WTC11 (cell line): ENCODE measurements at regions of chr19 and their contacts with region 1.

Region 1: DNA sequence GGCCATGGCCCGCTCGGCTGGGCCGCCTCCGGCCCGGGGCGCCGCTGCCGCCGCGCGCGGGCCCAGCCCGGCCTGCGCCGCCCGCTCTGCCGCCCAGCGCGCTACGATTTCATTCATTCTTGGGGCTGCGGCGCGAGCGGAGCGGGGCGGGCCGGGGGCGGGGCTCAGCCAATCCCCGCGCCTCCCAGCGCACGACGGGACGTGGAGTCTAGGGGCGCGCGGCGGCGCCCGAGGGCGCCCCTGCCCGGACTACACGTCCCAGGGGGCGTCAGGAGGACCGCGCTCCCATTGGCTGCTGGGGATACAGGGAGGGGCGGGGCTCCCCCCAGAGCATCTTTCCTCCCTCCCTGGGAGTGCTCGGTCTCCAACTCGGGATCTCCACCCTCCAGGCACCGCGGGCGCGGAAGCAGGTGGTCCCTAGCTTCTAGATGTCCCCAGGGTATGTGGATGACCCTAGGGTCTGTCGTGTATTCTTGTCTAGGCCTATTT is 5.6 kb upstream of the DPF1 start:
- DNase-seq: peak; percentile 79
- ATAC-seq: peak; percentile 35
- H3K4me3 Mint-ChIP-seq: peak overlapping the region; percentile 58
- H3K27ac Mint-ChIP-seq: no peak overlapping the region
- H3K4me1 Mint-ChIP-seq: peaks cover 20% of the 10 kb centered on the region
- H3K27me3 Mint-ChIP-seq: peaks cover 40% of the 10 kb centered on the region
- CTCF ChIP-seq: no peak

Region 2: DNA sequence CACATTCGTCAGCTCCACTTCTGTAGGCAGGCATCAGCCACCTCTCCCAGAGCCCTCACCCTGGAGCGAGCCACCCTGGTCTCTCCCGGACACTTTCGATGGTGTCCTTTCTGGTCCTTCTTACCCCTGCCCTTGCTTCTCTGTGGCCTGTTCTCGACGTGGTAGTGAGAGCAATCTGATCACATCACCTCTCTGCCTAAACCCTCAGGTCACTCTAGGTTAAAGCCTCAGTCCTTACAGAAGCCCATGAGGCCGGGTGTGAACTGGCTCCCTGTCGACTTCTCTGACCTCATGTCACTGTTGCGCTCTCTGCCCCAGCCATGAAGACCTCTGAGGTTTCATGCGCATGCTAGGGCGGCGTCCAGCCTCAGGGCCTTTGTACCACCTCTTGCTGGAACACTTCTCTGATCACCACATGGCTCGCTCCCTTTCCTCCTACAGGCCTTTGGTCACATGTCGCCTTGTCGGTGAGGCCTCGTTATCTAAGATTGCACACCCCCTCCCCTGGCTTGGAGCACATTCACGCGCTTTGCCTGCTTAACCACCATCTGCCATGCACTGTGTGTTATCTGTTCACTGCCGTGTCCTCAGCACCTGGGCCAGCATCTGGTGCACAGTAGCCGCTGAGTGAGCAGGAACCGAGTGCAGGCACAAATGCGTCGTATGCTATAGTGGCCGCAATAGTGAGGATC is 107.1 kb before region 1 on chr19:
- CTCF ChIA-PET with region 1: no interaction called
- POLR2A ChIA-PET with region 1: no interaction called
- DNase-seq: no peak
- ATAC-seq: no peak
- H3K4me3 Mint-ChIP-seq: no peak overlapping the region
- H3K27ac Mint-ChIP-seq: no peak overlapping the region
- H3K4me1 Mint-ChIP-seq: no peaks in the 10 kb centered on the region
- H3K27me3 Mint-ChIP-seq: no peaks in the 10 kb centered on the region
- CTCF ChIP-seq: no peak

Region 3: GRCh38 chr19:38245826-38246498 is 16.3 kb after region 1 on chr19:
- CTCF ChIA-PET with region 1: interaction called, 45 read pairs
- POLR2A ChIA-PET with region 1: interaction called, 3 read pairs
- DNase-seq: no peak
- ATAC-seq: no peak
- H3K4me3 Mint-ChIP-seq: no peak overlapping the region
- H3K27ac Mint-ChIP-seq: 0 out of 2 replicates have a peak overlapping the region, but pooled peaks have one; percentile 3
- H3K4me1 Mint-ChIP-seq: peaks cover 17% of the 10 kb centered on the region
- H3K27me3 Mint-ChIP-seq: peaks cover 2% of the 10 kb centered on the region; the same call in 1 of the 2 replicates
- CTCF ChIP-seq: no peak

Region 4: DNA sequence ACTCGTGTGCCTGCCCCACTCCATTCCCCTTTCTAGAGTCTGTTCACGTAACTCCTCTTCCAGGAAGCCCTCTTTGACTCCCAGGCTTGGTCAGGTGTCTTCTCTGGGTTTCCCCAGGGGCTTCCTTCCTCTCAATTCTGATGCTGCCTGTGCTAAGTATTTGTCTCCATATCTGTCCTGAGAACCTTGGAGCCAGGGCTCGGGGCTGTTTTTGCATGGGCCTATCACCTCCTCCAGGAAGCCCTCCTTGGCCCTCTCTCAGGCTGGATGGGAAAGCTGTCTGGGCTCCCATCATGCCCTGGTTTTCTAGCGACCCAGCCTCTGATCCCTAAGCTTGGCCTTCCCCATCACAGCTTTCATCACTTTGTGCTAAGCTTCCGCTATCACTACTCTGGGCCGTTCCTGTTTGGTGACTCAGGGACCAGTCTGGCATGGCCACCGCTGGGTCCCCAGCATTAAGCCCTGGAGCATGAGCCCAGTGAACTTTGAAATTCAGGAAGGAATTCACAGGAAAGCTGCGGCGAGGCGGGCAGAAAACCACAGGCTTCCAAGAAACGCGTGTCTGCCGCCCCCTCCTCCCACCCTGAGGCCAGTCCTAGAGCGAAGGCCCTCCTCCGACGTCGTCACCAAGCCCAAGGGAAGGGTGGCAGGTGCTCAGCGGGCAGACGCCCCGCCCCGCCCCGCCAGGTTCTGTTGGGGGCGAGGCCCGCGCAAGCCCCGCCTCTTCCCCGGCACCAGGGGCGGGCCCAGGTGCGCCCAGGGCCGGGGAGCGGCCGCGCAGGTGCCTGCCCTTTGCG is 34.3 kb after region 1 on chr19:
- CTCF ChIA-PET with region 1: interaction called, 16 read pairs
- POLR2A ChIA-PET with region 1: no interaction called
- DNase-seq: peak; percentile 97
- ATAC-seq: peak; percentile 89
- H3K4me3 Mint-ChIP-seq: peak overlapping the region; percentile 63
- H3K27ac Mint-ChIP-seq: peak overlapping the region; percentile 97
- H3K4me1 Mint-ChIP-seq: peaks cover 51% of the 10 kb centered on the region
- H3K27me3 Mint-ChIP-seq: no peaks in the 10 kb centered on the region
- CTCF ChIP-seq: no peak

Region 5: GRCh38 chr19:38335949-38336637 is 106.5 kb after region 1 on chr19:
- CTCF ChIA-PET with region 1: interaction called, 10 read pairs
- POLR2A ChIA-PET with region 1: interaction called, 3 read pairs
- DNase-seq: peak; percentile 93
- ATAC-seq: peak; percentile 71
- H3K4me3 Mint-ChIP-seq: peak overlapping the region; percentile 100
- H3K27ac Mint-ChIP-seq: peak overlapping the region; percentile 100
- H3K4me1 Mint-ChIP-seq: peaks cover 11% of the 10 kb centered on the region
- H3K27me3 Mint-ChIP-seq: peaks cover 3% of the 10 kb centered on the region; the same call in 1 of the 2 replicates
- CTCF ChIP-seq: no peak

Region 6: GRCh38 chr19:38387550-38388348 is 158.1 kb after region 1 on chr19 and contains the start of gene GGN:
- CTCF ChIA-PET with region 1: interaction called, 18 read pairs
- POLR2A ChIA-PET with region 1: interaction called, 8 read pairs
- DNase-seq: peak; percentile 98
- ATAC-seq: peak; percentile 77
- H3K4me3 Mint-ChIP-seq: peak within 1 kb of the TSS; percentile 85
- H3K27ac Mint-ChIP-seq: peak within 1 kb of the TSS; percentile 97
- H3K4me1 Mint-ChIP-seq: peaks cover 28% of the 10 kb centered on the region
- H3K27me3 Mint-ChIP-seq: peaks cover 3% of the 10 kb centered on the region; the same call in 1 of the 2 replicates
- CTCF ChIP-seq: no peak
- total RNA-seq, gene GGN: 2.4 to 3.1 TPM (median 2.7 TPM) in 3 replicates